Activated CD8-positive, alpha-beta T cell treated with anti-CD3 and anti-CD28 coated beads, Interleukin-2, amount 10 ng/mL, durations not matched to agents 7 days and 5 days (primary cell): ENCODE measurements at regions of chr5 and their contacts with region 1.

Region 1: DNA sequence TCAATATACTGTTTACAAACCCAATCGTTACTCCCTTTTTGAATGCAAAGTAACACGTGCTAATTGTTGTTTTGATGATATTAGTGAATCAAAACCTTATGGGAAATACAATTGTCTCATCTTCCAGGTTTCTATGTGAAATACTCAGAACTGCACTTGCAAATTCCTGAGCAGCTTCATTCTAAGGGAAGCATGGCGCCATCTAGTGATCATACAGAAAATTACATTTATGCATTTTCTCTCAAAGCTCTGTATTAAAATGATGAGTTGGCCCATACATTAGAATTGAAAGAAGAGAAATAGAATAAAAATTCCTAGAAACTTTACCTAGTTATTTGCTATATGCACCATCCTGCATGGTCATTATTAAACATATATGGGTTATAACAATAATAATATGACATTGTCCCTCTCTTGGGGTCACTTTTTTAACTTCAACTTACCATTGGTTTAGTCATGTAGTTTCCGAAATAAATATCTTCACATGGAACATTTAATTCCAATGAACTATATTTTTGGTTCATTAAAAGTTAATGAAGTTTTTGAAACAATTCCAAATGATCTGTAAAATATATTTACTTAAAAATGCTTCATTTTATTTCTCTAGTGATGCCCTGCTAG is 220.0 kb downstream of the PDE4D start:
- DNase-seq: no peak
- ATAC-seq: no peak
- H3K4me3 Mint-ChIP-seq: no peak overlapping the region
- H3K27ac Mint-ChIP-seq: no peak overlapping the region
- H3K4me1 Mint-ChIP-seq: no peaks in the 10 kb centered on the region
- H3K27me3 Mint-ChIP-seq: peaks cover 8% of the 10 kb centered on the region

Region 2: GRCh38 chr5:59390074-59390659 is 283.4 kb before region 1 on chr5:
- CTCF ChIA-PET with region 1: interaction called, 15 read pairs
- POLR2A ChIA-PET with region 1: no interaction called
- DNase-seq: peak; percentile 39
- ATAC-seq: no peak
- H3K4me3 Mint-ChIP-seq: no peak overlapping the region
- H3K27ac Mint-ChIP-seq: no peak overlapping the region
- H3K4me1 Mint-ChIP-seq: no peaks in the 10 kb centered on the region
- H3K27me3 Mint-ChIP-seq: peaks cover 15% of the 10 kb centered on the region

Region 3: GRCh38 chr5:59506285-59506877 is 167.2 kb before region 1 on chr5:
- CTCF ChIA-PET with region 1: interaction called, 34 read pairs
- POLR2A ChIA-PET with region 1: no interaction called
- DNase-seq: no peak
- ATAC-seq: no peak
- H3K4me3 Mint-ChIP-seq: no peak overlapping the region
- H3K27ac Mint-ChIP-seq: no peak overlapping the region
- H3K4me1 Mint-ChIP-seq: no peaks in the 10 kb centered on the region
- H3K27me3 Mint-ChIP-seq: peaks cover 7% of the 10 kb centered on the region

Region 4: DNA sequence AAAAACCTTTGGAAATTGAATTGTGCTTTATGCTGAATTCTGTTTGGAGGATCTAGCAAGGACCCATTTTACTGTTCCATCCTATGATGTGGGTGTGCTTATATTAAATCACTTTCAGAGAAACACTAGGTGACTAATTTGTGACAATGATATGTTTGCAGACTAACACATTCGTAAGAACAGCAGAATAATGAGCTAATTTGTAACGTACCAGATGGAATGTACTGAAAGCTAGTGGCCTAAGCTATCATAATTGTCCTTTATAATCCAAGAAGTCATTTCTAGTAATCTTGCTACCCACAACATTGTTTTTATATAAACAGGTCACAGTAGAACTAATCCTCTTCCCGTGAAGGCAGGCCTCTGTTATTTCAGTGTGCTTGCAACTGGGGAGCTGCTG is 72.5 kb before region 1 on chr5:
- CTCF ChIA-PET with region 1: no interaction called
- POLR2A ChIA-PET with region 1: no interaction called
- DNase-seq: no peak
- ATAC-seq: no peak
- H3K4me3 Mint-ChIP-seq: no peak overlapping the region
- H3K27ac Mint-ChIP-seq: no peak overlapping the region
- H3K4me1 Mint-ChIP-seq: peaks cover 3% of the 10 kb centered on the region
- H3K27me3 Mint-ChIP-seq: peaks cover 11% of the 10 kb centered on the region

Region 5: DNA sequence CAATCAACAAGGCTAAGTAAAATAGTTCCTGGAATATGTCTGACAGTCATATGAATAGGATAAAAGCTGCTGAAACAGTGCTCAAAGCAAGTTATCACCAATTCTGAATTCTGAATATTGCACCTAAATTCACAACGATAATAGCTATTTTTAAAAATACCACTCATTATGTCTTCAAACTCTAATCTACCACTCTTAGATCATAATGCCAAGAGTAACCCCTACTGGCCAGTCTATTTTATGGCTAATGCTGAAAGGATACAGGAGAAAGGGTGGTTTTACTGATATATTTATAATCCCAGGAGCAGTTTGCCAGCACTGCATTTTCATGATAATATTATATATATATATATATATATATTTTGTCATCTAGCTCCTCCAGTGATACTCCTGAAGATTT is 12.8 kb before region 1 on chr5:
- CTCF ChIA-PET with region 1: interaction called, 18 read pairs
- POLR2A ChIA-PET with region 1: no interaction called
- DNase-seq: no peak
- ATAC-seq: no peak
- H3K4me3 Mint-ChIP-seq: no peak overlapping the region
- H3K27ac Mint-ChIP-seq: no peak overlapping the region
- H3K4me1 Mint-ChIP-seq: peaks cover 20% of the 10 kb centered on the region
- H3K27me3 Mint-ChIP-seq: peaks cover 3% of the 10 kb centered on the region